AG04450 (cell line): ENCODE measurements at regions of chr4 and their contacts with region 1.

Region 1: DNA sequence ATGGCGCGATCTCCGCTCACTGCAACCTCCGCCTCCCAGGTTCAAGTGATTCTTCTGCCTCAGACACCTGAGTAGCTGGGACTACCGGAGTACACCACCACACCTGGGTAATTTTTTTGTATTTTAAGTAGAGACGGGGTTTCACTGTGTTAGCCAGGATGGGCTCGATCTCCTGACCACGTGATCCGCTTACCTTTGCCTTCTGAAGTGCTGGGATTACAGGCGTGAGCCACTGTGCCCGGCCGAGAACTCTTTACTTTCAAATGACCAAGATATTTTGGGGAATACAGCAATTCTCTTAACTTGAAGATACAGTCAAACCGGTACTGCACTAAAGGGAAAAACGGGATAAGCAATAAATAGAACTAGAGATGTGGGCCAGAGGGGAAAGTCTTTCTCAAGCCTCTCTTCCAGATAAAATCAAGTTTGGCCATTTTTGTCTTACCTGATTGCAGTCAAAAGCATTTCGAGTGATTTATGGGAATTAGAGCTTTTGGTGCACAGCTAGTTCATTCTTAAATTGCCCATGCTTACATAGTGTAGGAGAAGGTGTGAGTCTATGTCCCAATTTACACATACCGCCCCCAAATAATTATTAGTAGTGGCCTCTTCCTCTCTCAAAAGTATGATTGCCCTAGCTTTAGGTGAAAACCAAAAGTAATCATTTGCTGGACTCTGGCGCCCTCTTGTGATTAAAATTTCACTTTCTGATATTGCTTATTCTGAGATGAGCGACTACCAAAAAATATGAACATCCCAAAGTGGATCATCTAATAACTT is 53.2 kb upstream of the ABCG2 start:
- DNase-seq: peak; percentile 11
- H3K4me3 ChIP-seq: no peak overlapping the region
- H3K27ac ChIP-seq: no peak overlapping the region
- H3K27me3 ChIP-seq: peaks cover 3% of the 10 kb centered on the region
- CTCF ChIP-seq: peak; percentile 69

Region 2: DNA sequence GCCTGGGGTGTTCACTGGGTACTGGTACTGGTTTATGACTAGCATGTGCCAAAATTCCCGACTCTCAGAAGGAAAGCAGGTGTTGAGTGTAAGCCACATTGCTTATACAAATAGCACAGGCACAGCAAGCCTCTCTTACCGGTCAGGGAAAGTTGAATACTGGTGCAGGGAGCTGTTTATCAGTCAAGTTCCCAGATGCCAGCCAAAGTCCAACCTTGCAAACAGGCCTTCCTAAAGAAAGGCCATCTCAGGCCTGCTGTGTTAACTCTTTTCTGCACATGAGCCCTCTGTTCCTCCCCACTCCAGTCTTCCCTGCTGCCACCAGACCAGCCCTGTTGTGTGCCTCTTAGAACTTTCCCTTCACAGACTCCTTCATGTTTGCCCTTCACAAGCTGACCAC is 170.0 kb before region 1 on chr4:
- CTCF ChIA-PET with region 1: interaction called, 39 read pairs
- POLR2A ChIA-PET with region 1: no interaction called
- DNase-seq: no peak
- H3K4me3 ChIP-seq: no peak overlapping the region
- H3K27ac ChIP-seq: no peak overlapping the region
- H3K27me3 ChIP-seq: no peaks in the 10 kb centered on the region
- CTCF ChIP-seq: no peak

Region 3: DNA sequence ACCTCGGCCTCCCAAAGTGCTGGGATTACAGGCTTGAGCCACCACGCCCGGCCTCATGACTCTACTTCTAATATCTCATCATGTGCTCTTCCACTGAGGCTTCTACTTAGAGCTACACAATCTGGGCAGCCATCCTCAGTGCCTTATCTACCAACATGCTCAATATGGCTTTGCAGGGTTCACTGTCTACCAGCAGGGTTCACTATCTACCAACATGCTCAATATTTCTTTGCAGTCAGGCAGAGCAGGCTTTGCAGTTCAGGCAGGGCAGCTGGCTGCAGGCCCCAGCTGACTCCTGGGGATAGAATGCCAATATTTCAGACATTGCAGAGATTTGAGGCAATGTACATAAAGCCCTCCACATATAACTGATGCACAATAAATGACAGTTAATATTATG is 156.8 kb before region 1 on chr4:
- CTCF ChIA-PET with region 1: interaction called, 121 read pairs
- POLR2A ChIA-PET with region 1: no interaction called
- DNase-seq: peak; percentile 38
- H3K4me3 ChIP-seq: no peak overlapping the region
- H3K27ac ChIP-seq: no peak overlapping the region
- H3K27me3 ChIP-seq: no peaks in the 10 kb centered on the region
- CTCF ChIP-seq: peak; percentile 76

Region 4: GRCh38 chr4:88196013-88196365 is 15.7 kb before region 1 on chr4:
- CTCF ChIA-PET with region 1: interaction called, 14 read pairs
- POLR2A ChIA-PET with region 1: no interaction called
- DNase-seq: no peak
- H3K4me3 ChIP-seq: no peak overlapping the region
- H3K27ac ChIP-seq: no peak overlapping the region
- H3K27me3 ChIP-seq: no peaks in the 10 kb centered on the region
- CTCF ChIP-seq: no peak

Region 5: DNA sequence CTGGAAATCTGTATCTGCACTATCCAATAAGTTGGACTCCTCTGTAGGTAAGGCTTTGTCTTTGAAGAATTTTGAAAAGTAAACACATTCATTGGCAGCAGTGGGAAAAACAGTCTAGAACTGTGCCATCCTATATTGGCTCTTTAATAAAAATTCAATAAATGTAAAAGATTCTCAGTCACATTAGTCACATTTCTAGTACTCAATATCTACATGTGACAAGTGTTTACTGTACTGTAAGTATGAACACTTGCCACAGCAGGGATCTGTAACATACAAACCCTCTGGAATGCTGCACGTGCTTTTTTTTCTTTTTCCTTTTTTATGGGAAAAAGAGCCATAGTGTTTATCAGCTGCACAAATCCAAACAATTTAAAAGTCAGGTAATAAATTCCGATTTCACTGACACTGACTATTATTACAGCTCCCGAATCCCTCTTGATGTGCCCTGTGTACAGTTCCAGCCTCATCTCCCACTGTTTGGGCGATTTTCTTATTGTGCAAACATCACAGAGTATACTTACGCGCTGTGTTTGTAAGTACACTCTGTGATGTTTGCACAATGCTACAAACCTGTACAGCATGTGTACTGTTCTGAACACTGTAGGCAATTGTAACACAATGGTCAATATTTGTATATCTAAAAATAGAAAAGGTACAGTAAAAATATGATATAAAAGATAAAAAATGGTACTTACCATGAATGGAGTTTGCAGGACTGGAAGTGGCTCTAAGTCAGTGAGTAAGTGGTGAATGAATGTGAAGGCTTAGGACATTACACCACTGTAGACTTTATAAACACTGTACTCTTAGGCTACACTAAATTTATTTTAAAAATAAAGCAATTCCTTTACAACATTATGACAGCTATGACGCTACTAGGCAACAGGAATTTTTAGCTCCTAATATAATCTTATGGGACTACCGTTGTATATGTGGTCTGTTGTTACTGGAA is 303.2 kb after region 1 on chr4:
- CTCF ChIA-PET with region 1: interaction called, 363 read pairs
- POLR2A ChIA-PET with region 1: no interaction called
- DNase-seq: no peak
- H3K4me3 ChIP-seq: no peak overlapping the region
- H3K27ac ChIP-seq: no peak overlapping the region
- H3K27me3 ChIP-seq: no peaks in the 10 kb centered on the region
- CTCF ChIP-seq: no peak